ENCODE measurements at regions of chr16 and their contacts with region 1.

Region 1: DNA sequence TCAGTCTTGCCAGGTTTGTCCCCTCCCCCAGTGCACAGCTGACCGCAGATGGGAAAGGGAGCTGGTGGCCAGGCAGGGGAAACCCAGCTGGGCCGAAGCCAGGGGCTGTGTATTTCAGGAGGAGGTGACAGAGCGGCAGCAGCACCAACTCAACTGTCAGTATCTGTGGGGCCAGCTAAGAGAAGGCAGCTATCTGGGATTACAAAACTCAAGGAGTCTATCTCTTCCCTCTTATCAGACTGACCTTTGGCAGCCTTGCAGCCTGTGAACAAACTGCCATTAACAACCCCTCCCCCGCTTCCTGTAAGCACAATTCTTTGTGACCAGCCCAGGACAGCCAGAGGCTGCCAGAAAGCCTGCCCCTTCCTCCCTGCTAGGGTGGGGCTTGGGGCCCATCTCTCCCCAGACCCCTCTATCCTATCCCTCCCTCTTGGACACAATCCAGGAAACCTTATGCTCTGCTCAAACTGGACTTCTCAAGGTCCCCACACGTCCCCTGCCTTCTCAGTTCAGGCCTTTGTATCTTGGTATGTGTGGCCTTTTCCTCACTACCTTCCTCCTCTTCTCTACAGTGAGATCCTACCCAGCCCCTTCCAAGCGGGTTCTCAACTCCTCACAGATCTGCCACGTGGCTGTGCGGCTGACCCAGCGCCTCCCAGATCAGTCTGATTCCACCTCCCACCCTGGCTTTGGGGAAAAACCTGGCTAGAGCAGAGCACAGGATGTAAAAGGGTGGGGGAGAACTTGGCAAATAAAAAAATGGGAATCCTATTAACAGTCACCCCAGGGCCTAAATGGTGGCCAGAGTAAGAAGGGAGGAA is 10.5 kb downstream of the ST3GAL2 start:
- DNase-seq: peak; percentile 97 to 99
- ATAC-seq: peak; percentile 94 to 95 (median 95)
- H3K4me3 ChIP-seq: peak overlapping the region; percentile 29
- H3K27ac ChIP-seq: peak overlapping the region; percentile 95
- H3K4me1 ChIP-seq: peaks cover 72% of the 10 kb centered on the region
- H3K27me3 ChIP-seq: no peaks in the 10 kb centered on the region
- CTCF ChIP-seq: no peak

Region 2: DNA sequence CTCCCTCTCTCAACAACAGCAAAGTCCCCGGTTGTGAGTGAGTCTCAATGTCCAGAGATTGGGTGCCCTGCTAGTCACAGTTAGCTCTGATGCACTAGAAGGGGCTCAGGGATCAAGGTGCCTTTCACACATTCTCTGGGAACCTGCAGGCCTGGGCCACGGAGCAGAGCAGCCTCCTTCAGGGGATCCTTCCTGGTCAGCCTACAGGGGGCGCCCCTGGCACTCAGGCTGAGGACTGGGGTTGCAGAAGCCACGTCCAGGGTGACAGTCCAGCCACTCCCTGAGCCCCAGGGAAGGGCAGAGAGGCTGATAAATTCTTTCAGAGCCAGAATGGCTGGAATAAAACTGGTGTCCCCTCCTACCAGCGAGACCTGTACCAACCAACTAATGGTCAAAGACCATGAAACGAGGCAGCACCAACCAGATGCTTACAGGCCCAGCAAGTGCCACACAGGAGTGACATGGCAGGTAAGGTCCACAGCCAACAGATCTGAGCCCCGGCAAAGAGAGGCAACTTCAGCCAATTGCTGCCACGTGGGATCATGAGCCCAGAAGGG is 33.0 kb before region 1 on chr16:
- intact Hi-C with region 1: loop called (anchors 5 kb)
- DNase-seq: peak; percentile 71 to 87
- ATAC-seq: peak; percentile 67 to 75 (median 73)
- H3K4me3 ChIP-seq: no peak overlapping the region
- H3K27ac ChIP-seq: no peak overlapping the region
- H3K4me1 ChIP-seq: peaks cover 15% of the 10 kb centered on the region
- H3K27me3 ChIP-seq: no peaks in the 10 kb centered on the region
- CTCF ChIP-seq: peak; percentile 73

Measured in psoas muscle (tissue), 8 donors.